ENCODE measurements at regions of chr10 and their contacts with region 1.

Region 1: GRCh38 chr10:103712570-103713498 is 142.5 kb downstream of the SH3PXD2A start:
- DNase-seq: peak; percentile 45 to 67
- H3K4me3 ChIP-seq: no peak overlapping the region
- H3K27ac ChIP-seq: no peak overlapping the region
- H3K4me1 ChIP-seq: peaks cover 43% of the 10 kb centered on the region
- H3K27me3 ChIP-seq: no peaks in the 10 kb centered on the region
- CTCF ChIP-seq: peak; percentile 93

Region 2: DNA sequence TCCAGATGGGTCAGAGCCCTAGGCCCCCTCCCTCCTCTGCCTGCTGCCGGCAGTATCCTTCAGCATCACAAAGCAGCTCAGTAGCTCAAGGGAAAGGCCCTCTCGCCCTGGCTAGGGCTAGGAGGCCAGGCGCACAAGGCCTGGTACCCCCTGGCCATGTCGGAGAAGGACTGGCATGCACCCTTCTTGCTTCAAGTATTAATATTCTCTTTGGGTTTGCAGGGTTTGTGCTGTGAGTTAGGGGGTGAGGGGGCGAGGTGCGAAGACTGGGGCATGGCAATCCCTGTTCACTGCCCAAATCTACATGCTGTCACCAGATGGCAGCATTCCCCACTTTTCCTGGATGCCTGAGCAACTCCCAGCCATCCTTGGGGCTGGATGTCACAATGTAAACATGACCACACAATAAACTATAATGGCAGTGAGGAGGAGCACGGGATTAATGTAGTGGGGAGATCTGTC is 114.1 kb before region 1 on chr10:
- CTCF ChIA-PET with region 1: no interaction called
- POLR2A ChIA-PET with region 1: no interaction called
- intact Hi-C with region 1: loop called (anchors 2 kb)
- DNase-seq: peak; percentile 35 to 42
- H3K4me3 ChIP-seq: no peak overlapping the region
- H3K27ac ChIP-seq: no peak overlapping the region
- H3K4me1 ChIP-seq: no peaks in the 10 kb centered on the region
- H3K27me3 ChIP-seq: no peaks in the 10 kb centered on the region
- CTCF ChIP-seq: peak; percentile 68

Region 3: DNA sequence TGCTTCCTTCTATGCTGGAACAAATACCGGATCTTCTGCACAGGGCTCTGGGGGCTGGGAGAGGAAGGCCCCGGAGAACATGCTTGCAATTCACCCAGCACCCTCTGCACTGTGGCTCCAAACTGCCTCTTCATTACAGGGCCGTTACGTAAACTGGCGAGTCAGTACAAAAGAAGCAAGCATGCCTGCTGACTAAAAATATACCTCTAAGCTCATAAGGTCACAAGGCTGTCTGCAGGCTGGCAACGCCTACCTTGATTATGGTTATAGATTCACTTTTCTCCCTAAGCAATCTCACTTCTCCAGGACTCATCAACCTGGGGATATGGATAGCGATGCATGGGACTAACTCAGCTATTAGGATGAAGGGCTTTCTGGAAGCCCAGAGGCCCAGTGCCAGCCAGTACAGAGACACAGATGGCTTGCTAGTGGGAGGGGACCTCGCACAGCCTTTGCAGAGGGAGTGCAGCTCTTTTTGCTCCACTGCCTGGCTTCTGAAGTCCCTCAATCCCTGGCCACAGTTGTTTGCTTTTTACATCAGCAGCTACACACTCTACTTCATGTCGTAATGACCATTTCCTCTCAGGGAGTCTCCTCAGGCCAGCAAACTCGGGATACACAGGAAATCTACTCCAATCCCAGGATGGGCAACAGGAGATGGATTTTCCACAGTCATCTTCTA is 46.4 kb after region 1 on chr10:
- CTCF ChIA-PET with region 1: no interaction called
- POLR2A ChIA-PET with region 1: no interaction called
- intact Hi-C with region 1: loop called (anchors 5 kb)
- DNase-seq: peak; percentile 28 to 71
- H3K4me3 ChIP-seq: no peak overlapping the region
- H3K27ac ChIP-seq: peak overlapping the region; percentile 84
- H3K4me1 ChIP-seq: peaks cover 80% of the 10 kb centered on the region
- H3K27me3 ChIP-seq: no peaks in the 10 kb centered on the region
- CTCF ChIP-seq: no peak

Region 4: DNA sequence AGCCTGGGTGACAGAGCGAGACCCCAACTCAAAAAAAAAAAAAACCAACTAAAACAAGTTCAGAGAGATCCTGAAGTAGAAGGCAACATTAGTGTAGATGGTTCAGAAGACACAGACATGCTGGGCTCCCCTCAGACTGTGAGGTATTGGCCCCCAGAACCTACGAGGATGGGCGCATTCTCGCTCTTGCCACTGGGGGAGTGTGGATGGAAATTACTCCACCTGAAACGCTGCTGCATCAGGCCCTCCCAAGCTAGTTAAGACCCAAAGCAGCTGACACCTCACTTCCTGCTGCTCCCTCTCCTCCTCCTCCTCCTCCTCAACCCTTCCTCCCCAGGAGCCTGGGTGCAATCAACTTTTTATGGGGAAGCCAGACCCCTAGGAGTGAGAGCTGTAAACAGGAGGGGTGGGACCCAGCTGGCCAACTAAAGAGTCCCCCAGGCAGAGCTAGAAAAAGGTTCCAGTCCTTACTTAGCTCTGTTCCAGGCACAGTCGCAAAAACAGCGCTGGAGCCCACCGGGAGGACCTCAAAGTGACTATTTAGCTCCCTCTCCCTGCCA is 135.2 kb after region 1 on chr10:
- CTCF ChIA-PET with region 1: interaction called, 15 read pairs
- POLR2A ChIA-PET with region 1: no interaction called
- intact Hi-C with region 1: no loop called
- DNase-seq: no peak
- H3K4me3 ChIP-seq: no peak overlapping the region
- H3K27ac ChIP-seq: no peak overlapping the region
- H3K4me1 ChIP-seq: no peaks in the 10 kb centered on the region
- H3K27me3 ChIP-seq: no peaks in the 10 kb centered on the region
- CTCF ChIP-seq: no peak

Region 5: GRCh38 chr10:103870516-103870915 is 157.7 kb after region 1 on chr10:
- CTCF ChIA-PET with region 1: interaction called, 14 read pairs
- POLR2A ChIA-PET with region 1: no interaction called
- intact Hi-C with region 1: no loop called
- DNase-seq: peak; percentile 51 to 89
- H3K4me3 ChIP-seq: no peak overlapping the region; the same call in 1 of the 2 replicates
- H3K27ac ChIP-seq: peak overlapping the region; percentile 82
- H3K4me1 ChIP-seq: peaks cover 36% of the 10 kb centered on the region
- H3K27me3 ChIP-seq: no peaks in the 10 kb centered on the region
- CTCF ChIP-seq: no peak

Region 6: GRCh38 chr10:104045151-104046089 is 332.6 kb after region 1 on chr10:
- CTCF ChIA-PET with region 1: no interaction called
- POLR2A ChIA-PET with region 1: no interaction called
- intact Hi-C with region 1: loop called (anchors 10 kb)
- DNase-seq: peak; percentile 48 to 62
- H3K4me3 ChIP-seq: no peak overlapping the region
- H3K27ac ChIP-seq: no peak overlapping the region
- H3K4me1 ChIP-seq: peaks cover 20% of the 10 kb centered on the region
- H3K27me3 ChIP-seq: no peaks in the 10 kb centered on the region
- CTCF ChIP-seq: peak; percentile 71

Region 7: DNA sequence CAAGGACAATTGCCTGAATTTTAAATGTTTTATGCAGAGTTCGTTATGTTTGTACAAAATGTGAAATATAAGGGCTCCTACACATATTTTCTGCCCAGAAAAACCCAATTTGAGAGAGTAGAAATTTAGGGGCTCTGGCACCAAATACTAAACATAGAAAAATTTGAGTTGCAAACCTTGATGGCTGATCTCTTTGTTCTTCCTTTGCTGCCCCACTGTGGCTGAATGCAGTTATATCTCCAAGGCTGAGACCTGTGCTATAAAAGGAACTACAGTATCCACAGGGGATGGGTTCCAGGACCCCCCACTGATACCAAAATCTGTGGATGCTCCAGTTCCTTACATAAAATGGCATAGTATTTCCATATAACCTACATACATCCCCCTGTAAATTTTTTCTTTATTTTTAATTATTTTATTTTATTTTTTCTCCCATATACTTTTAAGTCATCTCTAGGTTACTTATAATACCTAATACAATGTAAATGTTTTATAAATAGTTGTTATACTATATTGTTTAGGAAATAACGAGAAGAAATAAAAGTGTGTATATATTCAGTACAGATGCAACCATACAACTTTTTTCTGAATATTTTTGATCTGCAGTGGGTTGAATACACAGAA is 496.9 kb after region 1 on chr10:
- CTCF ChIA-PET with region 1: no interaction called
- POLR2A ChIA-PET with region 1: no interaction called
- intact Hi-C with region 1: loop called (anchors 10 kb)
- DNase-seq: peak in 1 of 2 experiments; percentile 19
- H3K4me3 ChIP-seq: no peak overlapping the region
- H3K27ac ChIP-seq: no peak overlapping the region
- H3K4me1 ChIP-seq: no peaks in the 10 kb centered on the region
- H3K27me3 ChIP-seq: no peaks in the 10 kb centered on the region
- CTCF ChIP-seq: peak; percentile 69

Measured in PC-9 (cell line).